ENCODE measurements at regions of chr1 and their contacts with region 1.

Region 1: GRCh38 chr1:39609618-39610331 is 29.7 kb downstream of the HEYL start:
- DNase-seq: peak in 32 of 42 donors; percentile 8 to 79 (median 40)

Region 2: DNA sequence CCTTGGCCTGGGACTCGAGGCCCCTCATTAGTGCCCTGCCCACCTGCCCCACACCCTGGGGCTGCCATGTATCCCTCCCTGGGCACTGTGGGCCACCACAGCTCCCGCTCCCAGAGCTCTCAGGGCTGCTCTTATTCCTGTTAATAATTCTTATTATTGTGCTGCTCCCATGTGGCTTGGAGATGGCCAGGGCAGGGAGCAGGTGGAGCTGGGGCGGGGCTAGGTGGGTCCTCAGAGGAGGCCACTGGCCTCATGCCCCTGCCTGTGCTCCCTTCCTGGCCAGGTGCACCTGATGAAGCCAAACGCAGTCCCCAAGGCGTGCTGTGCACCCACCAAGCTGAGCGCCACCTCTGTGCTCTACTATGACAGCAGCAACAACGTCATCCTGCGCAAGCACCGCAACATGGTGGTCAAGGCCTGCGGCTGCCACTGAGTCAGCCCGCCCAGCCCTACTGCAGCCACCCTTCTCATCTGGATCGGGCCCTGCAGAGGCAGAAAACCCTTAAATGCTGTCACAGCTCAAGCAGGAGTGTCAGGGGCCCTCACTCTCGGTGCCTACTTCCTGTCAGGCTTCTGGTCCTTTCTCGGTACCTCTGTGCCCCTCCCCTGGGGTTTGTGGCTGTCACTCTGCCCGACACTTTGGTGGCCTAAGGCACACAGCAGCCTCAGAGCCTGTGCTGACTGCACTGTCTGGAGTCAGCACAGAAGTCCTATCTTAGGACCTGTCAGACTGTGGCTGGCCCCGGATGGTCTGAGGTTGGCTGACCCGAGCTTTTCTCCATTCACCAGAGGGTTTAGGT is 84.2 kb before region 1 on chr1:
- intact Hi-C with region 1: no loop called
- DNase-seq: no peak

Region 3: DNA sequence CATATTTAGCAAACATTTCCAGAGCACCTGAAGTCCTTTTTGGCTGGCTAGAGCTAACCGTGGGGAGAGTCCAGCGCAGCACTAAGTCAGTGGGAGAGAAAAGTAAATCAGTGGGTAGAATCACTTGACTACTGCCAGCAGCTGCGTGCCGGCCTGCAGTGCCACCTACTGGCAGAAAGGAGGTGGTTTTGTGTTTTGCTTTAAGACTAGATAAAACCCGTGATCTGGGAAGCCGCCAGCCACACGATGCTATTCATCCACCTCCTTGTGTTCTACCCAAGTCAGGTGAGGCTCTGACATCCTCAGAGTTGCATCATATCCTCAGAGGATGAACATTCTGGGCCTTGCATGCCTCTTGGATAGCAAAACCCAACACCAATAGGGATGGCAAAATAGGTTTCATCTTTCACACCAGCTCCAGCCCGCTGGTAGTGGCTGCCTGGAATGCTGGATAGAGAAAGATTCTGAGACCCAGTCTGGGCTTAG is 43.8 kb after region 1 on chr1:
- intact Hi-C with region 1: loop called (anchors 2 kb)
- DNase-seq: peak; percentile 74 to 92 (median 85)